ENCODE measurements at regions of chr11 and their contacts with region 1.

Region 1: DNA sequence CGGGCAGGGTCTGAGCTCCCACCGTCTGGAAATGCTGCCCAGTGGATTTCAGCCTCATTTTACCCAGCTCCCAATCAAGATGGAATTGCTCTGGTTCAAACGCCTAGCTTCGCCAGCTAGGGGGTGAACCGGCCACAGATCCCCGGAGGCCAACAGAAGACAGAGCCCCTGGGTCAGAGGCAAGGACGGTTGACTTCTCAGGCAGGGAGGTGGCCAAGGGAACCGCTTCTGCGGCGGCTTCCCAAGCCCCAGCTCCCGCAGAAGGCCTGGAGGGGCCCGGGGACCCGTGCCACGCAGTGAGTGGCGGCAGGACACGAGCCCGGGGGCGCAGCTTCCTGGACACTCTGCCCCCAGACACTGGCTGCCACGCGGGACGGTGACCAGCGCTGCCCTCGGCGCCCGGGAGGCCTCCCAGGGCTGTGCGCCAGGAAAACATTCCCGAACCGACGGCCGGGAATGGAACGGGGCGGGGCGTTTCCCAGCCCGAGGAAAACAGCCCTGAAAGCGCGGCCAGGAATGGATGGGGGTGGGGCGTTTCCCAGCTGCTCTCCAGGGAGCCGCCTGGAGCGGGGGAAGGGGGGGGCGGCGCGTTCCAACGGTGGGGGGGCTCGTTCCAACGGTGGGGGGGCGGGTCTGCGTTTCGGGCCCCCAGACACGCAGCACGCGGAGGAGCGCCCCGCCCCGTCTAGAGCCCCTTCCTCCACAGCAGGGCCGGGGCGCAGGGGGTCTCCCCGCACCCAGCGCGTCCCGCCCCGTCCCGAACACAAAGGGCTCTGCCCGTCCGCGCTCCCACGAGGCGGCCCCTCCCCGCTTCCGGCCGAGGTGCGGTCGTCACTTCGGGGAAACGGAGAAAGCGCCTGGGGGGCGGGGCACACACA is 13.5 kb upstream of the B4GALNT4 start:
- DNase-seq: peak; percentile 49
- ATAC-seq: peak; percentile 84
- H3K4me3 ChIP-seq: peak overlapping the region; percentile 73
- H3K27ac ChIP-seq: peak overlapping the region; percentile 100
- H3K4me1 ChIP-seq: peaks cover 33% of the 10 kb centered on the region
- H3K27me3 ChIP-seq: no peaks in the 10 kb centered on the region
- CTCF ChIP-seq: no peak
- EP300 ChIP-seq: peak in 1 of 2 experiments; percentile 6; a peak in 1 of 4 replicates
- POLR2A ChIP-seq: peak; percentile 80
- RAD21 ChIP-seq: no peak

Region 2: GRCh38 chr11:250740-251299 is 105.0 kb before region 1 on chr11:
- CTCF ChIA-PET with region 1: interaction called, 45 read pairs
- POLR2A ChIA-PET with region 1: interaction called, 5 read pairs
- RAD21 ChIA-PET with region 1: interaction called, 23 read pairs
- SMC1A ChIA-PET with region 1: interaction called, 3 read pairs
- in situ Hi-C with region 1: loop called (anchors 5 kb)
- intact Hi-C with region 1: no loop called
- DNase-seq: no peak
- ATAC-seq: peak; percentile 94
- H3K4me3 ChIP-seq: no peak overlapping the region
- H3K27ac ChIP-seq: no peak overlapping the region
- H3K4me1 ChIP-seq: no peaks in the 10 kb centered on the region
- H3K27me3 ChIP-seq: no peaks in the 10 kb centered on the region
- CTCF ChIP-seq: peak; percentile 61 to 77 (median 64)
- EP300 ChIP-seq: no peak
- POLR2A ChIP-seq: no peak
- RAD21 ChIP-seq: peak; percentile 63

Region 3: DNA sequence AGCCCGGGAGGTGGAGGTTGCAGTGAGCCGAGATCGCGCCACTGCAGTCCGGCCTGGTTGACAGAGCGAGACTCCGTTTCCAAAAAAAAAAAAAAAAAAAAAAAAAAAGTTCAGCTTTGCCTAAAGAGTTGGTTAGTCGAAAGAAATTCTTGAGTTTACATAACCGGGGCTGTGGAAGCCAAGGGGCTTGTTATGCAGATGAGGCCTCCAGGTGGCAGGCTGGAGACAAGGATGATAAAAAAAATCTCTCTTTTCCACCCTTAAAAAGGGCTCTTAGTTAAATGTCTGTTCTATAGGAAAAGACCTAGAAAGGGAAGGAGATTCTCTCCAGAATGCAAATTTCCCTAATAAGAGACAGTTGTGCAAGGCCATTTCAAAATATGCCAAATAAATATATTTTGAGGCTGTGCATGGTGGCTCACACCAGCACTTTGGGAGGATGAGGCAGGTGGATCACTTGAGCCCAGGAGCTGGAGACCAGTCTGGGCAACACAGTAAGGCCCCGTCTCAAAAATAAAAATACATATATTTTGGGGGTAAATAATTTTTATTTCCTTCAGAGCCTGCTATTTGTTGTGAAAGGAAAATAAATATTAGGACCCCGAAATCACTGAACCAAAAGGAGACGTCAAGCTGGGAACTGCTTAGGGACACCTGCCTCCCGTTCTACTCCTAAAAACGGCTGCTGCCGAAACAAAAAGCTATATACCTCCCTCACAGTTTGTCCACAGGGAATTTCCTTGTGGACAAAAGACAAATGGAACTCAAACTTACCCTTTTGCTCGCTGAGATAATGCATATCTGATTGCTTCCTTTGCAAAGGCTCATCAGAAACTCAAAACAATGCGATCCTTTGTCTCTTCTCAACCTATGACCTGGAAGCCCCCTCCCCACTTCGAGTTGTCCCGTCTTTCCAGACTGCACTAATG is 50.6 kb before region 1 on chr11:
- CTCF ChIA-PET with region 1: interaction called, 31 read pairs
- POLR2A ChIA-PET with region 1: interaction called, 20 read pairs
- RAD21 ChIA-PET with region 1: interaction called, 19 read pairs
- SMC1A ChIA-PET with region 1: interaction called, 20 read pairs
- in situ Hi-C with region 1: no loop called
- intact Hi-C with region 1: no loop called
- DNase-seq: no peak
- ATAC-seq: 0 out of 3 replicates have a peak, but pooled peaks have one; percentile 12
- H3K4me3 ChIP-seq: no peak overlapping the region
- H3K27ac ChIP-seq: no peak overlapping the region
- H3K4me1 ChIP-seq: peaks cover 20% of the 10 kb centered on the region
- H3K27me3 ChIP-seq: no peaks in the 10 kb centered on the region
- CTCF ChIP-seq: peak; percentile 66 to 67 (median 66)
- EP300 ChIP-seq: no peak
- POLR2A ChIP-seq: no peak
- RAD21 ChIP-seq: peak; percentile 69

Region 4: GRCh38 chr11:326842-327580 is 28.8 kb before region 1 on chr11:
- CTCF ChIA-PET with region 1: interaction called, 26 read pairs
- POLR2A ChIA-PET with region 1: interaction called, 86 read pairs
- RAD21 ChIA-PET with region 1: interaction called, 68 read pairs
- SMC1A ChIA-PET with region 1: interaction called, 44 read pairs
- in situ Hi-C with region 1: no loop called
- intact Hi-C with region 1: no loop called
- DNase-seq: peak; percentile 96
- ATAC-seq: peak; percentile 78
- H3K4me3 ChIP-seq: peak overlapping the region; percentile 56
- H3K27ac ChIP-seq: peak overlapping the region; percentile 100
- H3K4me1 ChIP-seq: peaks cover 51% of the 10 kb centered on the region
- H3K27me3 ChIP-seq: no peaks in the 10 kb centered on the region
- CTCF ChIP-seq: no peak
- EP300 ChIP-seq: peak; percentile 87 to 89
- POLR2A ChIP-seq: peak; percentile 70
- RAD21 ChIP-seq: no peak

Region 5: DNA sequence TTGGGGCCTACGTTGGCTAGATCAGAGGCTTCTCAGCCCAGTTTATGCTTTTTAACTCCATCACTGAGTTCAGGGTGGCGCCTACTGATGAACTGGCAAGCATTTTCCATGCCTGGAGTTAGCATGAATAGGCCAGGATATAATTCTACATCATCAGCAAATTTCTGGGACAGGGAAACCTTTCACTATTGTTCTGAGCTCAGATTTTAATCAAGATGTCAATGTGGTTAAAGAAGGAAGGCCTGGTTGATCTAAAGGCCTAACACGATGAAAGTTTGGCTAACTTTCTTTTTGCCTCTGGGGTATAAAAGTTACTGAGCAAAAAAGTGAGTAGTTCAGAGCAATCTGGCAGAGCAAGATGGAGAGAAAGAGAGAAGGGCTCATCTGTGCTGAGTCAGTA is 13.5 kb before region 1 on chr11:
- CTCF ChIA-PET with region 1: interaction called, 5 read pairs
- POLR2A ChIA-PET with region 1: interaction called, 11 read pairs
- RAD21 ChIA-PET with region 1: interaction called, 12 read pairs
- SMC1A ChIA-PET with region 1: interaction called, 3 read pairs
- in situ Hi-C with region 1: no loop called
- intact Hi-C with region 1: no loop called
- DNase-seq: no peak
- ATAC-seq: no peak
- H3K4me3 ChIP-seq: no peak overlapping the region
- H3K27ac ChIP-seq: no peak overlapping the region
- H3K4me1 ChIP-seq: peaks cover 2% of the 10 kb centered on the region
- H3K27me3 ChIP-seq: no peaks in the 10 kb centered on the region
- CTCF ChIP-seq: no peak
- EP300 ChIP-seq: no peak
- POLR2A ChIP-seq: no peak
- RAD21 ChIP-seq: no peak